PC-3 (cell line): ENCODE measurements at regions of chr11 and their contacts with region 1.

Region 1: DNA sequence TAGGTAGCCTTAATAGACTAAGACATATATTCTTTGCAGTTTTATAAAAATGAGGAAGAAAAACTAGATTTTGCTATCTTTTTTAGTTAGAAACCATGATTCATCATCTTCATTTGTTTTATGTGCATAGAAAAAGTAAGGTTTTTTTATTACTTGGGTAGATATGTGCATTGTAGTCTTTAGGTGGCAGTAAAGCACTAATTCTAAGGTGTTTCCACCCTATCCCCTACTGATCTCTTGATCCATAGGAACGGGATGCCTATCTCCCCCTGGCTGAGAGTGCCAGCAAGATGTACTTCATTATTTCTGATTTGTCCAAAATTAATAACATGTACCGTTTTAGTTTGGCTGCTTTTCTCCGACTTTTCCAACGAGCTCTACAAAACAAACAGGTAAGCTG is 148.1 kb downstream of the DYNC2H1 start:
- DNase-seq: peak; percentile 67
- ATAC-seq: peak; percentile 86
- H3K4me3 ChIP-seq: no peak overlapping the region
- H3K27ac ChIP-seq: no peak overlapping the region
- H3K4me1 ChIP-seq: no peaks in the 10 kb centered on the region
- H3K27me3 ChIP-seq: no peaks in the 10 kb centered on the region
- CTCF ChIP-seq: peak; percentile 75

Region 2: DNA sequence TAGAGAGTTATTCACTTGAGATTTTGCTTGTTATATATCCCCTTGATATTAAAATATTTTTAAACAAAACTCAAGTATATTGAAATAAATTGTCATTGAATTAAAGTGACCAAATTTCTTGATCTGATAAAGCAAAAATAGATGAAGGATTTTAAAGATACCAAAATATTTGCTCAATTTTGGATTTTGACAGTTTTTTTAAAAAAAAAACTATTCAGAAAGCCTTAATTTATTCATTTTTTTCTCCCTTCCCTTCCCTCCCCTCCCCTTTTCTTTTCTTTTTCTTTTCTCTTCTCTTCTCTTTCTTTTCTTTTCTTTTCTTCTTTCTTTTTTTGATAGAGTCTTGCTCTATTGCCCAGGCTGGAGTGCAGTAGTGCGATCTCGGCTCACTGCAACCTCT is 15.5 kb after region 1 on chr11:
- CTCF ChIA-PET with region 1: no interaction called
- POLR2A ChIA-PET with region 1: no interaction called
- intact Hi-C with region 1: no loop called
- DNase-seq: no peak
- ATAC-seq: no peak
- H3K4me3 ChIP-seq: no peak overlapping the region
- H3K27ac ChIP-seq: no peak overlapping the region
- H3K4me1 ChIP-seq: no peaks in the 10 kb centered on the region
- H3K27me3 ChIP-seq: no peaks in the 10 kb centered on the region
- CTCF ChIP-seq: no peak

Region 3: DNA sequence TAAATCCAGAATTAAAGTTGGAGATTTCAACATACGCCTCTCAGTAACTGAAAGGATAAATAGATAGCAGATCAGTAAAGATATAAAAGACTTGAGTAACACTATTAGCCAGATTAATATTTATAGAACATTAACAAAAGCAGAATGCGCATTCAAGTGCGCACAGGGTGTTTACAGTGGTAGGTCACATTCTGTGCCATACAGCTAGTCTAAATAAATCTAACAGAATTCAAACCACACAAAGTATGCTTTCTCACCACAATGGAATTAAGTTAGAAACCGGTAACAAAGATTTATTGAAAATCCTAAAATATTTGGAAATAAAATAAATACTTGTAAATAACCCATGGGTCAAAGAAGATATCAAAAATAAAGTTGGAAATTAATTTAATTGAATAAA is 192.9 kb after region 1 on chr11:
- CTCF ChIA-PET with region 1: no interaction called
- POLR2A ChIA-PET with region 1: no interaction called
- intact Hi-C with region 1: loop called (anchors 5 kb)
- DNase-seq: no peak
- ATAC-seq: no peak
- H3K4me3 ChIP-seq: no peak overlapping the region
- H3K27ac ChIP-seq: no peak overlapping the region
- H3K4me1 ChIP-seq: no peaks in the 10 kb centered on the region
- H3K27me3 ChIP-seq: no peaks in the 10 kb centered on the region
- CTCF ChIP-seq: no peak

Region 4: DNA sequence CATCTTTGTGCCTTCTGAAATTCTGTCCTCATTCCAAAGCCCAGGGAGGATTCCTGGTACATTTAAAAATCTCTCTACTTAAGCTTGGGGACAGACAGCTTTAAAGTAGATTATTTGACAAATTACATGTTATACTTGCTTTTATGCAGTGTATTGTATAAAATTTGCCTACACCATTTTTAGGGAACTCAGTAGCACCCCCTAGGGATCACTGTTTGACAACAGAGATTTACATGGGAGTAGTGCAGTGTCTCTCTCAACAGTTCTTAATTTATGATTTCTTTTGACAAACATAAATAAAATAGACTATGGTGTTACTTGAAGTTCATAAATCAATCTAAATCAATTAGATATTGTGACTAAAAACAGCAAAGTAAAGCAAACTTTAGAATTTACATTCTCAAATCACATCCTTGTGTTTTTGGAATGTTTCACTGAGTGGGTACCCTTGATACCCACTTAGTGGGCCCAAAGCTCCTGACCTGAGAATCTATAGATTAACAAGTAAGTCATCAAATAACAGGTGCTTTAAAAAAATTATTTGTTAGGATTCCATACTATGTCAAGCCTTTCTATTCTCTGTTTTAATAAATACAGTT is 280.6 kb after region 1 on chr11:
- CTCF ChIA-PET with region 1: no interaction called
- POLR2A ChIA-PET with region 1: no interaction called
- intact Hi-C with region 1: loop called (anchors 1 kb)
- DNase-seq: peak; percentile 80
- ATAC-seq: peak; percentile 83
- H3K4me3 ChIP-seq: no peak overlapping the region
- H3K27ac ChIP-seq: no peak overlapping the region
- H3K4me1 ChIP-seq: peaks cover 6% of the 10 kb centered on the region
- H3K27me3 ChIP-seq: no peaks in the 10 kb centered on the region
- CTCF ChIP-seq: peak; percentile 95